ENCODE measurements at regions of chr2 and their contacts with region 1.

Region 1: GRCh38 chr2:215626812-215627281 is 191.0 kb upstream of the FN1 start:
- DNase-seq: peak; percentile 79
- H3K4me3 ChIP-seq: peak overlapping the region in 1 of 3 experiments; percentile 27
- H3K27ac ChIP-seq: peak overlapping the region; percentile 91
- H3K4me1 ChIP-seq: peaks cover 33% of the 10 kb centered on the region
- H3K27me3 ChIP-seq: no peaks in the 10 kb centered on the region
- CTCF ChIP-seq: no peak
- POLR2A ChIP-seq: no peak

Region 2: DNA sequence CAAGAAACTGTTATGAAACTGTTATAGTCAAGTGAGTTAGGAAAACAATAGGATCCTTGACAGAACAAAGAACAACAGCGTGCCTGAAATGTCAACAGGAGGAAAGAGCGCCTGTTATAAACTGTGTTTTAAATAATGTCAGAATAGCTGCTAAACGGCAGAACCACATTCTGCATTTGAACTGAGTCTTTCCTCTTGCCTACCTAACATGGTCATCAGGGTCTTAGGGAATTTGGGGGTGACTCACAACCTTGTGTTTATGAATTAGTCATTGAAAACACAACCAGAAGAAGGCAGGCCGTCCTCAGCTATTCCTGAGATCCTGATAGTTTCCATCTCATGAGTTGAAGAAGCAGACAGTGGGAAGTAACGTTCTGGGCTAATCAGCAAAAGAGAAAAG is 31.0 kb after region 1 on chr2:
- CTCF ChIA-PET with region 1: interaction called, 3 read pairs
- POLR2A ChIA-PET with region 1: no interaction called
- dilution Hi-C with region 1: no loop called
- intact Hi-C with region 1: loop called (anchors 2 kb)
- DNase-seq: peak; percentile 87
- H3K4me3 ChIP-seq: no peak overlapping the region
- H3K27ac ChIP-seq: peak overlapping the region; percentile 27
- H3K4me1 ChIP-seq: peaks cover 15% of the 10 kb centered on the region
- H3K27me3 ChIP-seq: no peaks in the 10 kb centered on the region
- CTCF ChIP-seq: no peak
- POLR2A ChIP-seq: no peak

Region 3: GRCh38 chr2:215680605-215681598 is 54.1 kb after region 1 on chr2:
- CTCF ChIA-PET with region 1: no interaction called
- POLR2A ChIA-PET with region 1: no interaction called
- dilution Hi-C with region 1: no loop called
- intact Hi-C with region 1: no loop called
- DNase-seq: no peak
- H3K4me3 ChIP-seq: no peak overlapping the region
- H3K27ac ChIP-seq: no peak overlapping the region
- H3K4me1 ChIP-seq: no peaks in the 10 kb centered on the region
- H3K27me3 ChIP-seq: no peaks in the 10 kb centered on the region
- CTCF ChIP-seq: no peak
- POLR2A ChIP-seq: no peak

Region 4: GRCh38 chr2:215693193-215693998 is 66.5 kb after region 1 on chr2:
- CTCF ChIA-PET with region 1: no interaction called
- POLR2A ChIA-PET with region 1: no interaction called
- dilution Hi-C with region 1: no loop called
- intact Hi-C with region 1: loop called (anchors 2 kb)
- DNase-seq: peak; percentile 85
- H3K4me3 ChIP-seq: no peak overlapping the region
- H3K27ac ChIP-seq: peak overlapping the region; percentile 83
- H3K4me1 ChIP-seq: peaks cover 33% of the 10 kb centered on the region
- H3K27me3 ChIP-seq: no peaks in the 10 kb centered on the region
- CTCF ChIP-seq: no peak
- POLR2A ChIP-seq: no peak

Region 5: DNA sequence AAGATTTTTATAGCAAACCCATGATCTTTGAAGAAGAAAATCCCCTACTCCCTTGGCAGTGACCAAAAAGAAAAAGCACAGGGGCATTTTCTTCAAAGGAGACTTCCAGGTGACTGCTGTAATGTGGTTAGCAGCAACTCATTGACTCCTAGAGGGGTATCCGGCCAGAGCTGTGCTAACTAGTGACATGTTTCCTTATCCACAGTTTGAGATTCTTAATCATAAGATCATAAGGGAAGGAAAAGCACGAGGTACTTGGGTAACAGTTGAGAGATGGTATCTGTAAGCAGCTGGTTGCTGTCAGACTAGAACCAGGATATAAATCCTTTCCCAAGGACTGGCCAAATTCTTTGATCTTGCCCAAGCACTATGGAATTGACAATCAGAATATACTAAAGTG is 261.8 kb after region 1 on chr2:
- CTCF ChIA-PET with region 1: no interaction called
- POLR2A ChIA-PET with region 1: no interaction called
- dilution Hi-C with region 1: no loop called
- intact Hi-C with region 1: no loop called
- DNase-seq: peak; percentile 46
- H3K4me3 ChIP-seq: no peak overlapping the region
- H3K27ac ChIP-seq: no peak overlapping the region
- H3K4me1 ChIP-seq: no peaks in the 10 kb centered on the region
- H3K27me3 ChIP-seq: no peaks in the 10 kb centered on the region
- CTCF ChIP-seq: no peak
- POLR2A ChIP-seq: no peak

Region 6: DNA sequence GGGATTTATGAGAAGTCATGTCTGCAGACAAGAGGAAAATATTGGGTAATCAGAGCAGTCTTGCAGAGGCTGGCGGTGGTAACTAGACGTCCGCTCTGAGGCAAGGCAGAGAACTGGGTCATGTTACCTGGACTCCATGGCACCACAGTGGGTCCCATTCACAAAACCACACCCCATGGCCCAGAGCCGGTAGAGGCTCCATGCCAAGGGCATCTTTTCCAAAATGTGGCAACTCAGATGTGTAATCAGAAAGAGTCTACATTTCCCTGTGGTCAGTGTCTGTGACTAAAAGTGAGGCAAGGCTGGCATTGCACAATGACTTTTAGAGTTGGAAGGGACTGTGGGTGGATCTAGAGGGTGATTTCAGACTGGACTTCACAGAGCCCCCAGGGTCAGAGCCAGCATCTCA is 273.4 kb after region 1 on chr2:
- CTCF ChIA-PET with region 1: no interaction called
- POLR2A ChIA-PET with region 1: no interaction called
- dilution Hi-C with region 1: no loop called
- intact Hi-C with region 1: no loop called
- DNase-seq: no peak
- H3K4me3 ChIP-seq: no peak overlapping the region
- H3K27ac ChIP-seq: no peak overlapping the region
- H3K4me1 ChIP-seq: no peaks in the 10 kb centered on the region
- H3K27me3 ChIP-seq: no peaks in the 10 kb centered on the region
- CTCF ChIP-seq: no peak
- POLR2A ChIP-seq: no peak

Measured in endothelial cell of umbilical vein (primary cell).